CD8-positive, alpha-beta T cell (primary cell): ENCODE measurements at regions of chr19 and their contacts with region 1.

Region 1: DNA sequence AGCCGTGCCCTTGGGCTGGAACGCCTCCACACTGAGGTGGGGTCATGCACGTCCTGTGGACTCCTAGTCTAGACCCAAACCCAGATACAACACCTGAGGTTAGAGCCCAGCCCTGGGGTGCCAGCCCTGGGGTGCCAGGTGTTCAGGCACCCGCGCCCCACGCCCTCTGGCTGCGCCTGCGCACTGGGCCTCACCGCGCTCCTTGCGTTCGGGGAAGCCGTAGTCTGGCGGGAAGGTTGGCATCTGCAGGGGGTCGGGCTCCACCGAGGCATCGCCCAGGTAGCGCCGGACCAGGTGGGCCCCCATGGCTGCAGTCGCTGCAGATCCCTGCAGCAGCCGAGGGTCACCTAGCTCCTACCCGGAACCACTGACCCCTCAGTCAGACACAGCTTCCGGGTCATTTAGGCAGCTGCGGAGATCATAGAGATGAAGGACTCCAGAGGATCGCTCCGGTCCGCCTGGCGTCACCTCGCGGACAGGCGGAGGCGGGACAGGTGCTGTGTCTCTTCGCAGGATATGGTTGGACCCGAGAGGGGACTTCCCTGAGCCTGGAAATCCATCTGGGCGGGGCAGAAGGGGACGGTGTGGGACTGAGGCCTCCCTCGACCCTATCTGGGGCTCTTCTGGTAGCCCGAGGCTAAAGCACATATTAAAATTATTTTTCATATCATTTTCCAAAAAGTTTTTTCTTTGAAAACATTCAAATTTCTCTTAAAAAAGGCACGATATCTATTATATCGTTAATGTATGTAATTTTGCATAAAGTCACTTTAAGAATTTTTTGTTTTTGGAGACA is at the start of gene NDUFB7:
- DNase-seq: peak; percentile 77 to 98 (median 88)
- ATAC-seq: peak; percentile 94
- H3K4me3 ChIP-seq: peak within 1 kb of the TSS; percentile 81 to 100
- H3K4me3 Mint-ChIP-seq: peak within 1 kb of the TSS; percentile 96
- H3K27ac ChIP-seq: peak within 1 kb of the TSS; percentile 60 to 73
- H3K27ac Mint-ChIP-seq: peak within 1 kb of the TSS; percentile 91
- H3K4me1 ChIP-seq: peaks cover 21% of the 10 kb centered on the region
- H3K4me1 Mint-ChIP-seq: peaks cover 42% of the 10 kb centered on the region
- H3K27me3 ChIP-seq: no peaks in the 10 kb centered on the region
- H3K27me3 Mint-ChIP-seq: no peaks in the 10 kb centered on the region
- CTCF ChIP-seq: peak; percentile 65
- total RNA-seq, gene NDUFB7: 27.8 to 34.3 TPM

Region 2: GRCh38 chr19:14505488-14506432 is 66.1 kb before region 1 on chr19:
- CTCF ChIA-PET with region 1: interaction called, 10 read pairs
- POLR2A ChIA-PET with region 1: interaction called, 5 read pairs
- intact Hi-C with region 1: no loop called
- DNase-seq: peak; percentile 50 to 87 (median 76)
- ATAC-seq: peak; percentile 51
- H3K4me3 ChIP-seq: peak overlapping the region in 1 of 2 experiments; percentile 25
- H3K4me3 Mint-ChIP-seq: peak overlapping the region; percentile 56
- H3K27ac ChIP-seq: peak overlapping the region; percentile 62 to 76
- H3K27ac Mint-ChIP-seq: peak overlapping the region; percentile 96
- H3K4me1 ChIP-seq: peaks cover 49% of the 10 kb centered on the region
- H3K4me1 Mint-ChIP-seq: peaks cover 64% of the 10 kb centered on the region
- H3K27me3 ChIP-seq: no peaks in the 10 kb centered on the region
- H3K27me3 Mint-ChIP-seq: no peaks in the 10 kb centered on the region
- CTCF ChIP-seq: peak; percentile 82

Region 3: GRCh38 chr19:14689598-14690503 is 118.0 kb after region 1 on chr19 and contains the start of gene ZNF333:
- CTCF ChIA-PET with region 1: interaction called, 70 read pairs
- POLR2A ChIA-PET with region 1: interaction called, 6 read pairs
- intact Hi-C with region 1: loop called (anchors 1 kb)
- DNase-seq: peak; percentile 96 to 99 (median 98)
- ATAC-seq: peak; percentile 88
- H3K4me3 ChIP-seq: peak within 1 kb of the TSS; percentile 73 to 82
- H3K4me3 Mint-ChIP-seq: peak within 1 kb of the TSS; percentile 94
- H3K27ac ChIP-seq: peak within 1 kb of the TSS; percentile 88 to 99
- H3K27ac Mint-ChIP-seq: peak within 1 kb of the TSS; percentile 99
- H3K4me1 ChIP-seq: no peaks in the 10 kb centered on the region
- H3K4me1 Mint-ChIP-seq: peaks cover 24% of the 10 kb centered on the region
- H3K27me3 ChIP-seq: no peaks in the 10 kb centered on the region
- H3K27me3 Mint-ChIP-seq: no peaks in the 10 kb centered on the region
- CTCF ChIP-seq: no peak
- total RNA-seq, gene ZNF333: 16.4 to 17.1 TPM

Region 4: GRCh38 chr19:14890643-14891379 is 318.9 kb after region 1 on chr19:
- CTCF ChIA-PET with region 1: interaction called, 6 read pairs
- POLR2A ChIA-PET with region 1: no interaction called
- intact Hi-C with region 1: loop called in 1 of 2 experiments (anchors 1 kb)
- DNase-seq: no peak
- ATAC-seq: no peak
- H3K4me3 ChIP-seq: no peak overlapping the region
- H3K4me3 Mint-ChIP-seq: no peak overlapping the region
- H3K27ac ChIP-seq: no peak overlapping the region
- H3K27ac Mint-ChIP-seq: no peak overlapping the region
- H3K4me1 ChIP-seq: no peaks in the 10 kb centered on the region
- H3K4me1 Mint-ChIP-seq: peaks cover 4% of the 10 kb centered on the region
- H3K27me3 ChIP-seq: peaks cover 0 to 2% of the 10 kb centered on the region in 2 experiments
- H3K27me3 Mint-ChIP-seq: peaks cover 26% of the 10 kb centered on the region
- CTCF ChIP-seq: no peak

Region 5: DNA sequence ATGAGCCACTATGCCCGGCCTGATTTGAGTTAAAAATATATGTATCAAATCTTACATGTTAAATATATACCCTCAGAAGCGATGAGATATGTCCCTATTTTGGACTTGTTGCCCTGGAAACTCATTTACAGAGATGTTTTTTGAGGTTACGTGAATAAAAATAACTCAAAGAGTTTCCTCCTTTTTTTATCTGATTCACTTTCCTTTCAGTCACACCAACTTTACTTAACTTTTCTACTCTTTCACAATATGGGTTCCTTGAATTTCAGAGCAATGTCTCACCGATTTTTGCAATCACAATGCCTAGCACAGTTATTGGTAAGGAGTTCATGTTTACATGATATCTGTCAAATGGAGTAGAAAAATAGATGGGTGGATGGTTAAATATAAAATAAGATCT is 371.7 kb after region 1 on chr19:
- CTCF ChIA-PET with region 1: no interaction called
- POLR2A ChIA-PET with region 1: no interaction called
- intact Hi-C with region 1: no loop called
- DNase-seq: peak in 1 of 9 experiments; percentile 11
- ATAC-seq: no peak
- H3K4me3 ChIP-seq: no peak overlapping the region
- H3K4me3 Mint-ChIP-seq: peak overlapping the region; percentile 1
- H3K27ac ChIP-seq: no peak overlapping the region
- H3K27ac Mint-ChIP-seq: peak overlapping the region; percentile 6
- H3K4me1 ChIP-seq: peaks cover 5% of the 10 kb centered on the region
- H3K4me1 Mint-ChIP-seq: peaks cover 13% of the 10 kb centered on the region
- H3K27me3 ChIP-seq: no peaks in the 10 kb centered on the region
- H3K27me3 Mint-ChIP-seq: peaks cover 3% of the 10 kb centered on the region
- CTCF ChIP-seq: no peak